ENCODE measurements at regions of chr6 and their contacts with region 1.

Region 1: GRCh38 chr6:11585426-11586016 is 48.0 kb downstream of the TMEM170B start:
- DNase-seq: peak in 1 of 2 experiments; percentile 60
- H3K4me3 ChIP-seq: no peak overlapping the region
- H3K4me3 Mint-ChIP-seq: no peak overlapping the region
- H3K27ac Mint-ChIP-seq: peak overlapping the region; percentile 59
- H3K4me1 ChIP-seq: peaks cover 46% of the 10 kb centered on the region
- H3K4me1 Mint-ChIP-seq: peaks cover 43% of the 10 kb centered on the region
- H3K27me3 ChIP-seq: no peaks in the 10 kb centered on the region
- H3K27me3 Mint-ChIP-seq: no peaks in the 10 kb centered on the region
- CTCF ChIP-seq: peak; percentile 40 to 79

Region 2: GRCh38 chr6:11595903-11596302 is 10.4 kb after region 1 on chr6:
- CTCF ChIA-PET with region 1: interaction called, 3 read pairs
- POLR2A ChIA-PET with region 1: interaction called, 3 read pairs
- intact Hi-C with region 1: loop called (anchors 1 kb)
- DNase-seq: no peak
- H3K4me3 ChIP-seq: no peak overlapping the region
- H3K4me3 Mint-ChIP-seq: no peak overlapping the region
- H3K27ac Mint-ChIP-seq: peak overlapping the region; percentile 82
- H3K4me1 ChIP-seq: peaks cover 40% of the 10 kb centered on the region
- H3K4me1 Mint-ChIP-seq: peaks cover 34% of the 10 kb centered on the region
- H3K27me3 ChIP-seq: no peaks in the 10 kb centered on the region
- H3K27me3 Mint-ChIP-seq: no peaks in the 10 kb centered on the region
- CTCF ChIP-seq: peak; percentile 14 to 19

Region 3: DNA sequence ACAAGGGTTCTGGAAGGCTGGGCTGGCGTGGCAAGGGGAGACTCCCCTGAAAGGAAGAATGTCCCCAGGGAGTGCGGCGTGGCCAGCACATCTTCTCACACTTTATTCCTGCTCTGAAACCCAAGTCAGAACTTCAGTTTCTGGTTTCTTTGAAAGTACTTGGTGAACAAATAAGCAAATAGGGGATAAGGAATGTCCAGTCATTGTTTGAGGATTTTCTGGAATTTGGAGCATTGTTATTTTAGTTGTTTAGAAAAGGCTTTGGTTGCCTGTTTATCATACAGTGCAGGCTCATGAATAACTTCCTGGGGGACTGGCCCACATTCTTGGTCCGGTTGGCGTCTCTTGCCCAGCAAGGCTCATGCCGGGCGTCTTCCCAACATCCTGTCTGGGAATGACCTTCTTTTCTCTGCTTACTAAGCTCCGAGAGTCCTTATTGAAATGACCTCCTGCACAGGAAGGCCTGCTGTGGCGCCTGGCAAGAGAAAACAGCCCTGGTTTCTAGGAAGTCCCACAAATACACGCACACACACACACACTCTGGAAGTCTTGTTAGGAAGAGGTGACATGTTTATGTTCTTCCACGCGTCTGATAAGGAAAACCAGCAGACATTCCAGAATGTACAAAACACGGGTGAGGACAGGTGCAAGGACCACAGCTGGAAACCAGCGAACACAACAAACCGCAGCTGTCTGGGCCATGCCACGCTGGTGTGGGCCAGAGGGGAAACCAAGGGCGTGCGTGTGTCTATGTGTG is 24.0 kb after region 1 on chr6:
- CTCF ChIA-PET with region 1: interaction called, 3 read pairs
- POLR2A ChIA-PET with region 1: interaction called, 3 read pairs
- intact Hi-C with region 1: loop called (anchors 1 kb)
- DNase-seq: peak; percentile 55 to 58
- H3K4me3 ChIP-seq: no peak overlapping the region
- H3K4me3 Mint-ChIP-seq: peak overlapping the region; percentile 47
- H3K27ac Mint-ChIP-seq: peak overlapping the region; percentile 87
- H3K4me1 ChIP-seq: peaks cover 64% of the 10 kb centered on the region
- H3K4me1 Mint-ChIP-seq: peaks cover 35% of the 10 kb centered on the region
- H3K27me3 ChIP-seq: no peaks in the 10 kb centered on the region
- H3K27me3 Mint-ChIP-seq: no peaks in the 10 kb centered on the region
- CTCF ChIP-seq: no peak

Region 4: GRCh38 chr6:11632795-11633511 is 47.4 kb after region 1 on chr6:
- CTCF ChIA-PET with region 1: no interaction called
- POLR2A ChIA-PET with region 1: no interaction called
- intact Hi-C with region 1: loop called (anchors 5 kb)
- DNase-seq: no peak
- H3K4me3 ChIP-seq: no peak overlapping the region
- H3K4me3 Mint-ChIP-seq: no peak overlapping the region
- H3K27ac Mint-ChIP-seq: peak overlapping the region; percentile 35
- H3K4me1 ChIP-seq: peaks cover 16% of the 10 kb centered on the region
- H3K4me1 Mint-ChIP-seq: no peaks in the 10 kb centered on the region
- H3K27me3 ChIP-seq: no peaks in the 10 kb centered on the region
- H3K27me3 Mint-ChIP-seq: no peaks in the 10 kb centered on the region
- CTCF ChIP-seq: no peak

Region 5: GRCh38 chr6:11653028-11653583 is 67.6 kb after region 1 on chr6:
- CTCF ChIA-PET with region 1: no interaction called
- POLR2A ChIA-PET with region 1: no interaction called
- intact Hi-C with region 1: loop called (anchors 1 kb)
- DNase-seq: peak in 1 of 2 experiments; percentile 43
- H3K4me3 ChIP-seq: no peak overlapping the region
- H3K4me3 Mint-ChIP-seq: no peak overlapping the region
- H3K27ac Mint-ChIP-seq: peak overlapping the region; percentile 62
- H3K4me1 ChIP-seq: peaks cover 32% of the 10 kb centered on the region
- H3K4me1 Mint-ChIP-seq: peaks cover 17% of the 10 kb centered on the region
- H3K27me3 ChIP-seq: no peaks in the 10 kb centered on the region
- H3K27me3 Mint-ChIP-seq: no peaks in the 10 kb centered on the region
- CTCF ChIP-seq: no peak

Region 6: GRCh38 chr6:11770546-11771466 is 185.3 kb after region 1 on chr6:
- CTCF ChIA-PET with region 1: no interaction called
- POLR2A ChIA-PET with region 1: no interaction called
- intact Hi-C with region 1: no loop called
- DNase-seq: no peak
- H3K4me3 ChIP-seq: no peak overlapping the region
- H3K4me3 Mint-ChIP-seq: no peak overlapping the region
- H3K27ac Mint-ChIP-seq: peak overlapping the region; percentile 36
- H3K4me1 ChIP-seq: peaks cover 22% of the 10 kb centered on the region
- H3K4me1 Mint-ChIP-seq: peaks cover 8% of the 10 kb centered on the region
- H3K27me3 ChIP-seq: no peaks in the 10 kb centered on the region
- H3K27me3 Mint-ChIP-seq: no peaks in the 10 kb centered on the region
- CTCF ChIP-seq: no peak

Region 7: DNA sequence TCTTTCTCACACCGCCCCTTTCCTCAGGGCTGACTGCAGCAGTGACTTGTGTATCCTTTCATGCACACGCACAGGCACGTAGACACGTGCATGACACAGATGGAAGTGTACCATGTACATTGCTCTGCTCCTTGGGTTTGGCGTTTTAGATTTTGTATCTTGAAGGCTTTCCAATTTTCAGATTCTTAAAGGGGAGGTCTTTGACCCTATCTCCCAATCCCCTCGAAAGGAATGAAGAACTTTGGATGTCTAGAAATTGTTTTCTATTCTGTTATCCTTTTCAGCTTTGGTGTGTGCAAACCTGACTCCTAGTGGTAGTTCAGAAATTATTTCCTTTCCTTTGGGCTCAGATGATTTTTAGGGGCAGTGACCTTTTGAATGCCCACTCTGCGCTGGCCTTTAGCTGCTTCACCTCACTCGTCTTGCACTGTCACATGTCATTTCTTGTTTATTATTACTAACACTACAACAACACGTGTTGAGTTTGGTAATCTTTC is 489.6 kb after region 1 on chr6:
- CTCF ChIA-PET with region 1: no interaction called
- POLR2A ChIA-PET with region 1: no interaction called
- intact Hi-C with region 1: loop called (anchors 1 kb)
- DNase-seq: peak in 1 of 2 experiments; percentile 4
- H3K4me3 ChIP-seq: no peak overlapping the region
- H3K4me3 Mint-ChIP-seq: no peak overlapping the region
- H3K27ac Mint-ChIP-seq: no peak overlapping the region
- H3K4me1 ChIP-seq: no peaks in the 10 kb centered on the region
- H3K4me1 Mint-ChIP-seq: peaks cover 7% of the 10 kb centered on the region
- H3K27me3 ChIP-seq: no peaks in the 10 kb centered on the region
- H3K27me3 Mint-ChIP-seq: no peaks in the 10 kb centered on the region
- CTCF ChIP-seq: peak; percentile 30 to 60

Region 8: DNA sequence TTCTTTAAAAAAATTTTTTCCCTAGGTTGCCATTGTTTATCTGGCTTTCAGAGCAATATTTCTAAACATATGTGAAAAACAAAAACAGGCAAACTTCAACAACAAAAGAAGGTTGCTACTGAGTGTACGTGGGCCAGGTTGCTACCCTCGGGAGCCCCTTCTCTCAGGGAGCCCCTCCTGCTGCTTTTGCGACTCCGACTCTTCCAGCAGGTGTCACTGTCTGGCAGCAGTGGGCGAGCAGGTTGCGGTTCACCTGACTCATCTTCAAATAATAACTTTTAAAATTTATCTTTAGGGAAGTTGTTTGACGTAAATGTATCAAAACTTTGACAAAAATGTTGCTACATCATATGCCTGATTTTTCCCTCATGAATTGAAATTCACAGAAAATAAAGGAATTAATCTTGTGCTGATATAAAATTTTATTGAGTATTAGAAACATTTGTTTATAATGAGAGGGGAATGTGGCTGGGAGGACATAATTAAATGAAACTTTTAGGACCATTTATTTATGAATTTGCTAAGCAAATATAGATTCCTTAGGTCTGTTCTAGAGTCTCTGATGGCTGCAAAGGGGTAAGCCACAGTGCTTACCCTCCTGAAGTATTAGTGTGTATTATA is 565.4 kb after region 1 on chr6:
- CTCF ChIA-PET with region 1: no interaction called
- POLR2A ChIA-PET with region 1: no interaction called
- intact Hi-C with region 1: loop called (anchors 10 kb)
- DNase-seq: peak; percentile 52 to 71
- H3K4me3 ChIP-seq: no peak overlapping the region
- H3K4me3 Mint-ChIP-seq: no peak overlapping the region
- H3K27ac Mint-ChIP-seq: no peak overlapping the region
- H3K4me1 ChIP-seq: no peaks in the 10 kb centered on the region
- H3K4me1 Mint-ChIP-seq: no peaks in the 10 kb centered on the region
- H3K27me3 ChIP-seq: no peaks in the 10 kb centered on the region
- H3K27me3 Mint-ChIP-seq: no peaks in the 10 kb centered on the region
- CTCF ChIP-seq: peak; percentile 79 to 86